ENCODE measurements at regions of chr5 and their contacts with region 1.

Region 1: DNA sequence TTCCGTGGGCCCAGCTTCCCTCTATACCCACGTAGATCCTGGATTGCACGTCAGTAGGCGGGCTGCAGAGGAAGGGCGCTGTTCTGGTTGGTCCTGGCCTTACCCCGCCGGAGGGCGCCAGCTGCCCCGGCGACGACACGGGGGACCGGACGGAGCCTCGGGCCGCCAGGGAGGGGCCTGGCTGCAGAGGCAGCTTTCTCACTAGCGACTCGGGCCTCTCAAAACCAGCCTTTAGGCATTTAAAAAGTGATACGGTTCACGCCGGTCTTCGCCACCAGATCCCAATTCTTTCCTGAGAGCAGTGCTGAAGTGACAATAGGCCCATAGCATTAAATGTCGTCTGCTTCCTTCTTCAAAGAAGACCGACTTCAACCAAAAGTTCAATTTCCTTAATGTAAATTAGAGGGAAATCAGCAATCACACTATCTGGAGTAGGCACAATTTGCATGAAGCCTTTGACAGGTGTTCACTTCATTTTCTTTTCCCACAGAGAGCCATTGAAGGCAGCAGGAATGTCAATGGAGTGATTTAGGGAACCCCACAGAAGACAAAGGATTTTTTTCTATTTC is 17.6 kb upstream of the UBE2D2 start:
- DNase-seq: peak; percentile 78
- ATAC-seq: peak; percentile 98
- H3K4me3 Mint-ChIP-seq: peak overlapping the region; percentile 50
- H3K27ac Mint-ChIP-seq: peak overlapping the region; percentile 80
- H3K4me1 Mint-ChIP-seq: peaks cover 10% of the 10 kb centered on the region
- H3K27me3 Mint-ChIP-seq: no peaks in the 10 kb centered on the region
- CTCF ChIP-seq: no peak

Region 2: GRCh38 chr5:139415221-139415861 is 128.2 kb before region 1 on chr5:
- CTCF ChIA-PET with region 1: no interaction called
- POLR2A ChIA-PET with region 1: no interaction called
- DNase-seq: no peak
- ATAC-seq: no peak
- H3K4me3 Mint-ChIP-seq: no peak overlapping the region
- H3K27ac Mint-ChIP-seq: no peak overlapping the region
- H3K4me1 Mint-ChIP-seq: peaks cover 9% of the 10 kb centered on the region
- H3K27me3 Mint-ChIP-seq: no peaks in the 10 kb centered on the region; the same call in 1 of the 2 replicates
- CTCF ChIP-seq: no peak

Region 3: GRCh38 chr5:139524932-139525585 is 18.4 kb before region 1 on chr5:
- CTCF ChIA-PET with region 1: interaction called, 11 read pairs
- POLR2A ChIA-PET with region 1: no interaction called
- DNase-seq: no peak
- ATAC-seq: no peak
- H3K4me3 Mint-ChIP-seq: no peak overlapping the region; the same call in 1 of the 2 replicates
- H3K27ac Mint-ChIP-seq: no peak overlapping the region; the same call in 1 of the 2 replicates
- H3K4me1 Mint-ChIP-seq: peaks cover 71% of the 10 kb centered on the region
- H3K27me3 Mint-ChIP-seq: peaks cover 17% of the 10 kb centered on the region
- CTCF ChIP-seq: no peak

Region 4: GRCh38 chr5:139670369-139671095 is 127.0 kb after region 1 on chr5:
- CTCF ChIA-PET with region 1: no interaction called
- POLR2A ChIA-PET with region 1: no interaction called
- DNase-seq: no peak
- ATAC-seq: 0 out of 2 replicates have a peak, but pooled peaks have one; percentile 6
- H3K4me3 Mint-ChIP-seq: no peak overlapping the region
- H3K27ac Mint-ChIP-seq: peak overlapping the region; percentile 59
- H3K4me1 Mint-ChIP-seq: peaks cover 71% of the 10 kb centered on the region
- H3K27me3 Mint-ChIP-seq: no peaks in the 10 kb centered on the region
- CTCF ChIP-seq: no peak